Activated T-helper 1 cell treated with anti-CD3 and anti-CD28 coated beads, Interleukin-12 subunit alpha, Interleukin-12 subunit beta, Interleukin-2, Interleukin-4 antibody, amounts not matched to agents 30 ng/mL and 10 ng/mL and 1 ng/mL, durations not matched to agents 14 hours and 24 hours and 36 hours (primary cell): ENCODE measurements at regions of chr6 and their contacts with region 1.

Region 1: DNA sequence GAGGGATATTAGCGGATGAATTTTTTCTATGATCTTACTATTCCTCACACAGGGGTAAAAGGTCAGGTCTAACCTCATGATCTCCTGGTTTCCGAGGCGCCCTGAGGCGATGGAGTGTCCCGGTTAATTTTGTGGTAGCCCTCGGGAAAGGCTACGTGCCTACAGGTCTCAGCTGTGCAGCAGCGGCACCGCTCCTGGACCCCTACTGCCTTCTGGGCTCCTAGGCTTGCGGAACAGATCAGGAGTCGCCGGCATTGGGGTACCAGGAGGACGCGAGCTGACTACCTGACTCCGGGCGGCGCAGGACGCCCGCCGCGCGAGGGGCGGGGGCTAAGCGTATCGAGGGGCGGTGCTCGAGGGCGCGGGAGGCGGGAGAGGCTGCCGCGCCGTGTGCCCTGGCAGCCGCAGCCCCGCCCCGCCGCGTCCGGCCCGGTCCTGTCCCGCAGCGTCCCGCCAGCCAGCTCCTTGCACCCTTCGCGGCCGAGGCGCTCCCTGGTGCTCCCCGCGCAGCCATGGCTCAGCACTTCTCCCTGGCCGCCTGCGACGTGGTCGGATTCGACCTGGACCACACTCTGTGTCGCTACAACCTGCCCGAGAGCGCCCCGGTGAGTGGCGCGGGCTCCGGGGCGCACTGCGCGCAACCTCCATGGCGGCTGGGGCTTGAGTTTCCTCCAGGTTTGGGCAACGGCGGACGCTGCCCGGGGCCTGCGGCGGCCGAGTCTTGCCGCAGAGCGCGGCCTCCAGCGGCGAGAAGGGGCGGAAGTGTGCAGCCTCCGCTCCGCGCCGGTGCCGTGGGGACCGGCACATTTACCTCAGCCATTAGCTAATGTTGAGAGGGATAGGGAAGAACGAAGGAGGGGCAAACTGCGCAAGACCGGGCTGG is at the start of gene NT5DC1:
- DNase-seq: peak; percentile 82
- H3K4me3 Mint-ChIP-seq: peak within 1 kb of the TSS; percentile 95
- H3K27ac Mint-ChIP-seq: peak within 1 kb of the TSS; percentile 87
- H3K4me1 Mint-ChIP-seq: peaks cover 53% of the 10 kb centered on the region
- H3K27me3 Mint-ChIP-seq: no peaks in the 10 kb centered on the region
- total RNA-seq, gene NT5DC1: 30.1 and 37.2 TPM in 2 replicates

Region 2: GRCh38 chr6:115891111-115891669 is 209.5 kb before region 1 on chr6:
- intact Hi-C with region 1: loop called (anchors 2 kb)
- DNase-seq: no peak
- H3K4me3 Mint-ChIP-seq: no peak overlapping the region
- H3K27ac Mint-ChIP-seq: peak overlapping the region; percentile 41
- H3K4me1 Mint-ChIP-seq: peaks cover 18% of the 10 kb centered on the region
- H3K27me3 Mint-ChIP-seq: no peaks in the 10 kb centered on the region

Region 3: DNA sequence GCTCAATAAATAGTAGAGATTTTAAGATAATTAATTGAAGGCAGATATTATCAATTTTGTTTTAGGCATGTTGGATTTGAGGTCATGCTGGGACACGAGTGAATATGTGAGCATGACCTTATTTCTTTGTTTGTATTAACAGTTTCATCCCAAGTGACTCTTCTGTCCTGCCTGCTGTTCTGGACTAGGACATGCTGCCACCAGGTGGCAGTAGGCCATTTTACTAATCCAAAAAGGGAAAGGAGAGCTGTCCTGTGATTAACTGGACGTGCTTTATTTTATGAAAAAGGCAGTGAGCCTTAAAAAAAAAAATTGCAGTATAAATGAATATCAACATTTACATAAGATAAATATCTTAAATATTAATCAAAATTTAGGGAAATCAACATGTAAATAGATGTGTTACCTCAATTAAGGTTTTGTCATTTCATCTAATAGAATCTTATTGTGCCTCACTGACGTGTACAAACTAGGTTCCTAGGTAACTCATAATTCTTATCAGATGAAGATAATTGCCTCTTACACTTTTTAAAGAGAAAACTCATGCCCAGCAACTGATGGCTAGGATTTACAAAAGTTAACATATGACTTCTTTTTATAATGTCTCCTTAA is 89.8 kb before region 1 on chr6:
- intact Hi-C with region 1: loop called (anchors 1 kb)
- DNase-seq: peak; percentile 6
- H3K4me3 Mint-ChIP-seq: no peak overlapping the region
- H3K27ac Mint-ChIP-seq: no peak overlapping the region
- H3K4me1 Mint-ChIP-seq: no peaks in the 10 kb centered on the region
- H3K27me3 Mint-ChIP-seq: peaks cover 14% of the 10 kb centered on the region

Region 4: GRCh38 chr6:116253505-116254296 is 153.0 kb after region 1 on chr6 and contains the start of gene TSPYL4:
- intact Hi-C with region 1: loop called (anchors 1 kb)
- DNase-seq: peak; percentile 88
- H3K4me3 Mint-ChIP-seq: no peak within 1 kb of the TSS
- H3K27ac Mint-ChIP-seq: no peak within 1 kb of the TSS
- H3K4me1 Mint-ChIP-seq: no peaks in the 10 kb centered on the region
- H3K27me3 Mint-ChIP-seq: no peaks in the 10 kb centered on the region
- total RNA-seq, gene TSPYL4: 20.4 and 21.4 TPM in 2 replicates

Region 5: GRCh38 chr6:116450769-116451740 is 350.4 kb after region 1 on chr6:
- intact Hi-C with region 1: loop called (anchors 10 kb)
- DNase-seq: no peak
- H3K4me3 Mint-ChIP-seq: peak overlapping the region; percentile 3
- H3K27ac Mint-ChIP-seq: peak overlapping the region; percentile 47
- H3K4me1 Mint-ChIP-seq: peaks cover 44% of the 10 kb centered on the region
- H3K27me3 Mint-ChIP-seq: peaks cover 2% of the 10 kb centered on the region

Region 6: DNA sequence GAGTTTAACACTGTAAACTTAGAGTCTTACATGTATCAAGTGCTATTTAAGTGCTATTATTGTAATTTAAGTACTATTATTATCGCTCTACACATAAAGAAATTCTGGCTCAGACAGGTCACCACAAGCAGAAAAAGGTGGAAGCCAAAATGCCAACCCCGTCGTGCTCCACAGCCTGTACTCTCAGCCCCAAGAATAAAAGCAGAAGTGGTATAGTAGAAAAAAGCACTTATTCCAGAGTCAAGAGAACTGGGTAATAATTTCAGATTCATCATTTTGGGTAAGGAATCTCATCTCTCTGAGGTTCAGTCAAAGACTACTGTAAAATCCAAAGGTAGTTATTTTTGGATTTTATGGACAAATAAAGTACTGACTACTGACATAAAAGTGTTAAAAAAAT is 567.0 kb after region 1 on chr6:
- intact Hi-C with region 1: loop called (anchors 1 kb)
- DNase-seq: no peak
- H3K4me3 Mint-ChIP-seq: peak overlapping the region; percentile 100
- H3K27ac Mint-ChIP-seq: peak overlapping the region; percentile 97
- H3K4me1 Mint-ChIP-seq: peaks cover 45% of the 10 kb centered on the region
- H3K27me3 Mint-ChIP-seq: peaks cover 6% of the 10 kb centered on the region

Region 7: DNA sequence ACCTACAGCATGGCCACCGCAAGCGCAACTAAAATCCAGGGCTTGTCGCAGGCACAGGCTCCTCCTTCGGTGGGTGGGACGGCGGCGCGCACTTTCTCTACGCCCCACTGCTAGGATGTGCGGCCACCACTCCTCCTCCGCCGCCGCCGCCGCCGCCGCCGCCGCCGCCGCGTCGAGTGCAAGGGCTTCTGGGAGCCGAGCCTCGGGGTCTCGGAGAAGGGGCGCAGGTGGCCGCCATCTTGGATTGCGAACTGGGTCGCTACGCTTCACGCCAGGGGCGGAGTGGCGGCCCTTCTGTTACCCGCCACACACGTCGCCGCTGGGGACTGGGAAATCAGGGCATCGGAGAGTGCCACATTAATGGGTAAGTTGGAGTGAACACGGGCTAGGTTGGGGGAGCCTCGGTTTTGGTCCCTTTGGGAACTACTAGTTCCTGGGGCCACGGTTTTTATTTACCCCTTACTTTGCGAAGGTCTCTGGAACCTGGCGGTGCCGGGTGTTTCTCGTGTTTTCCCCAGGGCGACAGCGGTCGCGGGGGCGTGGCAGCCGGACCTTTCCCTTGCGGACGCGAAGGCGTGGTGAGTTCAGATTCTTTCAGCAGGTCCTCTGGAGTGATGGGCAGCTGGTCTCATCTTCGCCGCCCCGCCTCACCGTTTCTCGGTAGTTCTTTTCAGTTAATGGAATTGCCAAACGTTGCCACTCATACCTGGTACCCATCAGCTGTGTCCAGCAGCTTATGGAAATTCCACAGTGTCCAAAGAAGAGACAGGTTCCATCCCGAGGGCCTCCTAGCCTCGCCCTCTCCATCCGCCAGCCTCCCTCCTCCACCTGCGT is 580.5 kb after region 1 on chr6 and contains the start of gene KPNA5:
- intact Hi-C with region 1: loop called (anchors 5 kb)
- DNase-seq: peak; percentile 84
- H3K4me3 Mint-ChIP-seq: peak within 1 kb of the TSS; percentile 97
- H3K27ac Mint-ChIP-seq: peak within 1 kb of the TSS; percentile 97
- H3K4me1 Mint-ChIP-seq: peaks cover 25% of the 10 kb centered on the region
- H3K27me3 Mint-ChIP-seq: no peaks in the 10 kb centered on the region
- total RNA-seq, gene KPNA5: 6.1 and 7.6 TPM in 2 replicates